ENCODE measurements at regions of chr20 and their contacts with region 1.

Region 1: DNA sequence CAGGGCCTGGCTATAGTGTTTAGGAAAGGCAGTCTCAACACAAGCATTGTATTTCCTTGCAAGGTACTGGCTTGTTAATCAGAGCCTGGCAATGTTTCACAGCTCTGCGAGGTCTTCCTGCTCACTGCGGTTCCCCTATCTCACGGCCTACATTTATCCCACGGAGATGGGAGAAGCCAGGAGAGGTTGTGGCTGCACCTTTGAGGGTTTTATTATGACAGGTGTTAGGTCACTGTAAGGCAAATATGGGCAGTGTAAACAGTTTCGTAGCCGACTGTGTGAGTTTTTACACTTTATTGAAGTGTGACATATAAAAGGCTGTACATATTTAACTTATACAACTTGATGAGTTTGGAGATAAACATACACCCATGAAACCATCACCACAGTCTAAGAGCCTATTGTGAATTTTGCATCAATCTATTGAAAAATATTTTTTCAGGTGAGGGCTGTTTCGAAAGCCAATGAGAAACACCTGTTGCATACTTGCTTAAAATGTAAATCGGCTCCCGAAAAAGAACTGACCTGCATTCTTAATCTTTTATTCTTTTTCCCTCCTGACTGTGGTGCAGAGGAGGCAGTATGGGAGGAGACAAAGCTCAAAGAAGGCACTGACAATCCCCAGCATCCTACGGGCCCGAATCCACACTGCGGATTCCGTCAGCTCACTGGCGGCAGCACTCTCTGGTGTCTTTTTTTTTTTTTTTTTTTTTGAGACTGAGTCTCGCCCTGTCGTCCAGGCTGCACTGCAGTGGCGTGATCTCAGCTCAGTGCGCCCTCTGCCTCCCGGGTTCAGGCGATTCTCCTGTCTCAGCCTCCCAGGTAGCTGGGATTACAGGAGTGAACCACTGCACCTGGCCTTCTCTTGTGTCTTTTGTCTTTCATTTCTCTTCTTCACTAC is 7.5 kb upstream of the RBM38 start:
- DNase-seq: peak in 2 of 5 donors; percentile 31 to 40
- H3K4me3 ChIP-seq: no peak overlapping the region
- H3K27ac ChIP-seq: no peak overlapping the region
- H3K4me1 ChIP-seq: no peaks in the 10 kb centered on the region
- H3K27me3 ChIP-seq: no peaks in the 10 kb centered on the region
- CTCF ChIP-seq: no peak

Region 2: GRCh38 chr20:57501461-57502335 is 118.0 kb after region 1 on chr20:
- intact Hi-C with region 1: loop called (anchors 5 kb)
- DNase-seq: peak in 2 of 5 donors; percentile 43 to 52
- H3K4me3 ChIP-seq: no peak overlapping the region
- H3K27ac ChIP-seq: no peak overlapping the region
- H3K4me1 ChIP-seq: no peaks in the 10 kb centered on the region
- H3K27me3 ChIP-seq: no peaks in the 10 kb centered on the region
- CTCF ChIP-seq: no peak

Region 3: GRCh38 chr20:57573890-57574289 is 190.2 kb after region 1 on chr20:
- intact Hi-C with region 1: no loop called
- DNase-seq: no peak
- H3K4me3 ChIP-seq: no peak overlapping the region
- H3K27ac ChIP-seq: no peak overlapping the region
- H3K4me1 ChIP-seq: peaks cover 9 to 16% (median 12%) of the 10 kb centered on the region in 3 donors
- H3K27me3 ChIP-seq: no peaks in the 10 kb centered on the region
- CTCF ChIP-seq: no peak